CD8-positive, alpha-beta T cell (primary cell): ENCODE measurements at regions of chr4 and their contacts with region 1.

Region 1: DNA sequence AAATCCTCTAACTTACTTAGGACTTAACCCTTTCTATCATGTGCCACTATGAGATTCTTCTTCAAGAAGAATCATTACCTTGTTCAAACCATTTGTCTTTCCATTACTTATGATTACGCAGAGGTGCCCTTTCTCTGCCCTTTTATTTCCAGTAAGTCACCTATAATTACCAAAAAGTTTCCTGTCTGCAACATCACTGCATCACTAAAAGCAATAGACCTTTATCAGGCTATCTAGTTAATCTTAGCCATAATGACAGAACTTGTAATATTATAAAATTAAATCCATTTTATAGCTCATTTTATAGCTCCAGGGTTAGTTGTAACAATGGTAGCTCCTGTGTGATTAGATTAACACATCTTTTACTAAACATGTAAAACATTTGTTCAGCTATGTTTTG is 673.6 kb upstream of the PITX2 start:
- DNase-seq: no peak
- ATAC-seq: no peak
- H3K4me3 ChIP-seq: no peak overlapping the region
- H3K4me3 Mint-ChIP-seq: no peak overlapping the region
- H3K27ac ChIP-seq: no peak overlapping the region
- H3K27ac Mint-ChIP-seq: no peak overlapping the region
- H3K4me1 ChIP-seq: no peaks in the 10 kb centered on the region
- H3K4me1 Mint-ChIP-seq: no peaks in the 10 kb centered on the region
- H3K27me3 ChIP-seq: no peaks in the 10 kb centered on the region
- H3K27me3 Mint-ChIP-seq: no peaks in the 10 kb centered on the region
- CTCF ChIP-seq: no peak

Region 2: DNA sequence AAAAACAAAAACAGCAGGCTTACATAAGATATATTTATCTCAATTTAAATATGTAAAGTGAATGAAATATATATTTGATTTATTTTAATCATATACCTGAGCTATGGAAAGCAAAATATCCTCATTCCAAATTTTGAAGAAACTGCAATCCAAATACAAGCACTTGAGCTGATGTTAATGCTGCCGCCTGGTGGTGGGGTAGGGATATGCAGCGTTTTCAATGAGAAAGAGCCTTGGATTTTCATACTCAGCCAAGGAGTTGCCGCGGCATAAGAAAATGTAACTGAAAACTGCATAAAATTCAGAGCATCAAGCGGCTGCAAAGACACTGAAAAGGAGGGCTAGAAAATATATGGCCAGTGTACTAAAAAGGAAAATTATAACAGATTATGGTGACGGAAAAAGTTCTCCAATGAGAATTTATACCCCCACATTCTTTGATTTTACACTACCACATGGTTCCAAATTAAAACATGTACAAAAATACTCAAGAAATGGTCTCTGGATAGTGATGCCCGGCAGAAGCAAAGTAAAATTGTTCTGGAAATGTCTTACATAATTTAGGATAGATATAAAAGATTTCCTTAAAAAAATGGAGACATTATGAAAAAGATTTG is 13.3 kb before region 1 on chr4:
- CTCF ChIA-PET with region 1: no interaction called
- POLR2A ChIA-PET with region 1: no interaction called
- intact Hi-C with region 1: loop called in 1 of 2 experiments (anchors 1 kb)
- DNase-seq: peak in 5 of 9 experiments; percentile 0 to 21 (median 6)
- ATAC-seq: no peak
- H3K4me3 ChIP-seq: no peak overlapping the region
- H3K4me3 Mint-ChIP-seq: no peak overlapping the region
- H3K27ac ChIP-seq: no peak overlapping the region
- H3K27ac Mint-ChIP-seq: no peak overlapping the region
- H3K4me1 ChIP-seq: no peaks in the 10 kb centered on the region
- H3K4me1 Mint-ChIP-seq: no peaks in the 10 kb centered on the region
- H3K27me3 ChIP-seq: no peaks in the 10 kb centered on the region
- H3K27me3 Mint-ChIP-seq: no peaks in the 10 kb centered on the region
- CTCF ChIP-seq: peak; percentile 53

Region 3: DNA sequence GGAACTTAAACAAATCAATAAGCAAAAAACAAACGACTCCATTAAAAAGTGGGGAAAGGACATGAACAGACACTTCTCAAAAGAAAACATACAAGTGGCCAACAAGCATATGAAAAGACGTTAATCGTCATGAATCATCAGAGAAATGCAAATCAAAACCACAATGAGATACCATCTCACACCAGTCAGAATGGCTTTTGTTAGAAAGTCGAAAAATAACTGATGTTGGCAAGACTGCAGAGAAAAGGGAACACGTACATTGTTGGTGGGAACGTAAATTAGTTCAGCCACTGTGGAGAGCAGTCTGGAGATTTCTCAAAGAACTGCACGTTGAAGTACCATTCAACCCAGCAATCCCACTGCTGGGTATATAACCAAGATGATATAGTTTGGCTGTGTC is 1195.9 kb after region 1 on chr4:
- CTCF ChIA-PET with region 1: no interaction called
- POLR2A ChIA-PET with region 1: no interaction called
- intact Hi-C with region 1: no loop called
- DNase-seq: no peak
- ATAC-seq: no peak
- H3K4me3 ChIP-seq: no peak overlapping the region
- H3K4me3 Mint-ChIP-seq: no peak overlapping the region
- H3K27ac ChIP-seq: no peak overlapping the region
- H3K27ac Mint-ChIP-seq: no peak overlapping the region
- H3K4me1 ChIP-seq: no peaks in the 10 kb centered on the region
- H3K4me1 Mint-ChIP-seq: no peaks in the 10 kb centered on the region
- H3K27me3 ChIP-seq: no peaks in the 10 kb centered on the region
- H3K27me3 Mint-ChIP-seq: peaks cover 11% of the 10 kb centered on the region
- CTCF ChIP-seq: no peak